Mammary epithelial cell (primary cell): ENCODE measurements at regions of chr14 and their contacts with region 1.

Region 1: DNA sequence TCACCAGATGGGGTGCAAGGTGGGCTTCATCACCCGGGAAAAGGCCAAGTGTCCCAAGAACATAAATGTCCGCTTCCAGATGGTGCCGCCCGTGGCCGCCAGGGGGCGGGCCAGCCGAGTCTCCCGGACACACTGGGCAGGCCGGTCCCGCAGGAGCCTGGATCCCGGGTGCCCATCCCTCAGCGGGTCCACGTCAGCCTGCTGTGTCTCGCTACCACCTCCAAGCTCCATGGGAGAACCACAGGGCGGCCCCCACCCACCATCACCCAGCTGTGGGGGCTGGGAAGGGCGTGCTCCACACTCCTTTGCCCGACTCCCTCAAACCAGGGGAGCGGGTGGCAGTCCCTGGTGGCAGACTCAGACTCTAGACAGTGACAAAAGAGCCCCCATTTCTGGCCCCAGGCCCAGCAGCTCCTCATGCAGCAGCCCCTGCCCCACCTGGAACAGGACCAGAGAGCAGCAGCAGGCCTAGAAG is 22.0 kb upstream of the NUDT14 start:
- DNase-seq: peak; percentile 28
- H3K4me3 ChIP-seq: no peak overlapping the region
- H3K27ac ChIP-seq: no peak overlapping the region
- H3K4me1 ChIP-seq: peaks cover 22% of the 10 kb centered on the region
- H3K27me3 ChIP-seq: no peaks in the 10 kb centered on the region
- CTCF ChIP-seq: peak; percentile 81 to 90

Region 2: GRCh38 chr14:104677512-104678332 is 525.4 kb before region 1 on chr14:
- CTCF ChIA-PET with region 1: no interaction called
- dilution Hi-C with region 1: no loop called
- in situ Hi-C with region 1: no loop called
- intact Hi-C with region 1: no loop called
- DNase-seq: peak; percentile 69
- H3K4me3 ChIP-seq: peak overlapping the region in 2 of 3 experiments; percentile 33 to 46
- H3K27ac ChIP-seq: peak overlapping the region; percentile 43
- H3K4me1 ChIP-seq: peaks cover 51% of the 10 kb centered on the region
- H3K27me3 ChIP-seq: no peaks in the 10 kb centered on the region
- CTCF ChIP-seq: no peak

Region 3: DNA sequence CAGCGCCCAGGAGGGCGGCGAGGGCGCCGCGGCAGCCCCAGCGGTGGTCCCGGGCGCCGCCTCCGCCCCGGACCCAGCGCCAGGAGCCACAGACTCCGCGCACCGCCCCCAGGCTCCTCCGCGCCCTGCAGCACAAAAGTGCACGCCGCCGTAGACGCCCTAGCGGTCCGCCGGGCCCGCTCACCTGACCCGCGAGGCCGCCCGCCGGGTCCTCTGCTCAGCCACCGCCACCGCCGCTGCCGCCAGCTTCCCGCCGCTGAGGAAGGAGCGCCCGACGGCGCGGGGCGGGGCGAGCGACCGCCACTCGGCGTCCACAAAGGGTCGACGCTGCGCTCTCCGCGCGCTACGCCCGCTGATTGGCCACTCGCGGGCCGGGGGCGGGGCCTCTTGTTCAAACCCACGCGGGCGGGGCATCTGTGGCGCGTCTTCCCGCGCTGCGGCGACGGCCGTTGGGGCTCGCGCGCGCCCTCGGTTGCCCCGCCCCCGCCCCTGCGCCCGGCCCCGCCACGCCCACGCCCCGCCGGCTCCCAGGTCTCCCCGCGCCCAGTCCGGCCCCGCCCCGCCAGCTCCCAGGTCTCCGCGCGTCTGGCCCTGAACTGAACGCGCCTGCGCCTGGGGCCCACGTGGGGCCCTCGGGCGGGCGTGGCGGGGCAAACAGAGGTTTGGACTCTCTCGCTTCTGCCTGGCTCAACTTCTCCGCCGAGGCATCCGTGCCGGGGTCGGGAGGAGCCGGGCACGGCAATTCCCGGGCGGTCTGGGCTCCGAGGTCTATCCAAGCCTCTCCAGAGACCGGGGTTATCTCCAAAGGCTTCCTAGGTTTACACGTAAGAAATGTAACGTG is 182.1 kb before region 1 on chr14 and contains the start of gene CDCA4:
- CTCF ChIA-PET with region 1: no interaction called
- dilution Hi-C with region 1: no loop called
- in situ Hi-C with region 1: no loop called
- intact Hi-C with region 1: no loop called
- DNase-seq: peak; percentile 96
- H3K4me3 ChIP-seq: peak within 1 kb of the TSS; percentile 82 to 97 (median 95)
- H3K27ac ChIP-seq: peak within 1 kb of the TSS; percentile 94
- H3K4me1 ChIP-seq: peaks cover 68% of the 10 kb centered on the region
- H3K27me3 ChIP-seq: no peaks in the 10 kb centered on the region
- CTCF ChIP-seq: no peak
- total RNA-seq, gene CDCA4: 38.2 to 61.7 TPM

Region 4: DNA sequence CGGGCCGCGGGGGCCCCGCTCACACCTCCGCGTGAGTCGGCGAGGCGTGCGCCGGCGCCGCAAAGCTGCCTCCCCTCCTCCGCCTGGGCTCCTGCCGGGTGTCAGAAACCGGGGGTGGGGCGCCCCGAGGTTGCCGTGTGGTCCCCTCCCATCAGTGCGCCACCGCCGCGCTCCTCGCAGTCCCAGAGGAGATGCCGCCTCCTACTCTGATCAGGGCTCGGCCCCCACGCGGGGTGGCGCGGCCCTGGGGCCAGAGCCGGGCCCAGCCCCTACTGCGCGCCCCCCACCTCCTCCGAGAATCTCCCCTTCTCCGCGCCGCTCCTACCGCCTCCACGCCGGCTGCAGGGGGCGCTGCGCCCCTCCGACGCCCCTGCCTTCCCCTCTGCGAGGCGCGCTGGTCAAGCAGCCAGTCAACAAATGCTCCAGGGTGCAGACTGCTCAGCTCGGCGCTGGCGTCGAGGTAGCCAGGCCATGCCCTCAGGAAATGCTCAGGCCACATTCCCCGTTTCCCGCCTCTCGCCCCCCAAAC is 34.1 kb before region 1 on chr14:
- CTCF ChIA-PET with region 1: no interaction called
- dilution Hi-C with region 1: no loop called
- in situ Hi-C with region 1: no loop called
- intact Hi-C with region 1: loop called (anchors 2 kb)
- DNase-seq: peak; percentile 29
- H3K4me3 ChIP-seq: peak overlapping the region in 2 of 3 experiments; percentile 34 to 36
- H3K27ac ChIP-seq: no peak overlapping the region
- H3K4me1 ChIP-seq: peaks cover 31% of the 10 kb centered on the region
- H3K27me3 ChIP-seq: no peaks in the 10 kb centered on the region
- CTCF ChIP-seq: peak; percentile 18 to 56

Region 5: GRCh38 chr14:105351920-105352851 is 149.1 kb after region 1 on chr14:
- CTCF ChIA-PET with region 1: no interaction called
- dilution Hi-C with region 1: no loop called
- in situ Hi-C with region 1: no loop called
- intact Hi-C with region 1: loop called (anchors 1 kb)
- DNase-seq: peak; percentile 82
- H3K4me3 ChIP-seq: no peak overlapping the region
- H3K27ac ChIP-seq: no peak overlapping the region
- H3K4me1 ChIP-seq: no peaks in the 10 kb centered on the region
- H3K27me3 ChIP-seq: no peaks in the 10 kb centered on the region
- CTCF ChIP-seq: peak; percentile 85 to 90